Lower lobe of right lung (tissue), 2 donors: ENCODE measurements at regions of chr20 and their contacts with region 1.

Region 1: GRCh38 chr20:25179439-25180089 is 15.9 kb upstream of the ENTPD6 start:
- DNase-seq: no peak
- ATAC-seq: no peak
- H3K4me3 ChIP-seq: no peak overlapping the region
- H3K27ac ChIP-seq: no peak overlapping the region
- H3K4me1 ChIP-seq: peaks cover 9% of the 10 kb centered on the region
- H3K27me3 ChIP-seq: no peaks in the 10 kb centered on the region
- CTCF ChIP-seq: no peak

Region 2: GRCh38 chr20:24948939-24949679 is 230.5 kb before region 1 on chr20 and contains the start of gene CST7:
- intact Hi-C with region 1: no loop called
- DNase-seq: peak; percentile 62
- ATAC-seq: peak; percentile 75 to 86
- H3K4me3 ChIP-seq: peak within 1 kb of the TSS; percentile 39
- H3K27ac ChIP-seq: peak within 1 kb of the TSS; percentile 76
- H3K4me1 ChIP-seq: peaks cover 2% of the 10 kb centered on the region
- H3K27me3 ChIP-seq: peaks cover 9% of the 10 kb centered on the region
- CTCF ChIP-seq: no peak
- total RNA-seq, gene CST7: 11.7 TPM

Region 3: GRCh38 chr20:25136643-25137559 is 42.7 kb before region 1 on chr20:
- intact Hi-C with region 1: loop called (anchors 10 kb)
- DNase-seq: peak; percentile 59
- ATAC-seq: peak; percentile 77 to 79
- H3K4me3 ChIP-seq: no peak overlapping the region
- H3K27ac ChIP-seq: no peak overlapping the region
- H3K4me1 ChIP-seq: no peaks in the 10 kb centered on the region
- H3K27me3 ChIP-seq: no peaks in the 10 kb centered on the region
- CTCF ChIP-seq: no peak